Activated CD4-positive, alpha-beta memory T cell treated with anti-CD3 and anti-CD28 coated beads, Interleukin-2, amount 10 ng/mL, durations not matched to agents 7 days and 5 days (primary cell): ENCODE measurements at regions of chr11 and their contacts with region 1.

Region 1: DNA sequence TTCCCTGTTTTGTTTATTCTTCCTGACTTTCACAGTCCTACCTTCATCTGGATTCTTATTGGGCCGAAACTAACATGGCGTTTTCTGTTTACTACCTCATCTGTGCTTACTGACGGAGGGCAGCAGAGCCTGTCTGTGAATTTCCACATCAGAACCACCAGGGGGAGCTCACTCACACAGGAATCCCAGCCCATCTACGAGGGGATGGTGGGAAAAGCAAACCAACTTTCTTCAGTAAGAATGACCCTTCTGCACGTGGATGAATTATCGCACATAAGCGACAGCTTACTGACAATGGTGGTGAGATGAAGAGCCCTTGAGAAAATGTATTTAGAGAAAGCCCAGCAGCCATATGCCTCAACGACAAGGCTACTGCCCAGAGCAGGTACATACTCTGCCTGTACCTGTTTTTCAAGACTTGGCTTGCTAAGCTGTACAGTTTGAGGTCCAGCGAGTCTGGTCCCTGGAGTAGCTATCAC is 42.5 kb downstream of the LARGE2 start:
- DNase-seq: peak; percentile 62
- H3K4me3 Mint-ChIP-seq: no peak overlapping the region
- H3K27ac Mint-ChIP-seq: no peak overlapping the region
- H3K4me1 Mint-ChIP-seq: no peaks in the 10 kb centered on the region
- H3K27me3 Mint-ChIP-seq: no peaks in the 10 kb centered on the region

Region 2: GRCh38 chr11:45906096-45906682 is 58.8 kb before region 1 on chr11:
- CTCF ChIA-PET with region 1: no interaction called
- POLR2A ChIA-PET with region 1: no interaction called
- DNase-seq: no peak
- H3K4me3 Mint-ChIP-seq: no peak overlapping the region
- H3K27ac Mint-ChIP-seq: no peak overlapping the region
- H3K4me1 Mint-ChIP-seq: peaks cover 6% of the 10 kb centered on the region
- H3K27me3 Mint-ChIP-seq: peaks cover 7% of the 10 kb centered on the region

Region 3: GRCh38 chr11:45941285-45941684 is 23.7 kb before region 1 on chr11:
- CTCF ChIA-PET with region 1: interaction called, 15 read pairs
- POLR2A ChIA-PET with region 1: no interaction called
- DNase-seq: no peak
- H3K4me3 Mint-ChIP-seq: no peak overlapping the region
- H3K27ac Mint-ChIP-seq: no peak overlapping the region
- H3K4me1 Mint-ChIP-seq: no peaks in the 10 kb centered on the region
- H3K27me3 Mint-ChIP-seq: no peaks in the 10 kb centered on the region

Region 4: GRCh38 chr11:45982656-45983470 is 17.9 kb after region 1 on chr11:
- CTCF ChIA-PET with region 1: interaction called, 42 read pairs
- POLR2A ChIA-PET with region 1: no interaction called
- DNase-seq: no peak
- H3K4me3 Mint-ChIP-seq: no peak overlapping the region
- H3K27ac Mint-ChIP-seq: no peak overlapping the region
- H3K4me1 Mint-ChIP-seq: peaks cover 13% of the 10 kb centered on the region
- H3K27me3 Mint-ChIP-seq: no peaks in the 10 kb centered on the region

Region 5: GRCh38 chr11:46001448-46001914 is 36.5 kb after region 1 on chr11:
- CTCF ChIA-PET with region 1: interaction called, 44 read pairs
- POLR2A ChIA-PET with region 1: no interaction called
- DNase-seq: no peak
- H3K4me3 Mint-ChIP-seq: no peak overlapping the region
- H3K27ac Mint-ChIP-seq: no peak overlapping the region
- H3K4me1 Mint-ChIP-seq: peaks cover 2% of the 10 kb centered on the region
- H3K27me3 Mint-ChIP-seq: no peaks in the 10 kb centered on the region

Region 6: GRCh38 chr11:46121724-46122477 is 157.0 kb after region 1 on chr11:
- CTCF ChIA-PET with region 1: interaction called, 13 read pairs
- POLR2A ChIA-PET with region 1: no interaction called
- DNase-seq: peak; percentile 80
- H3K4me3 Mint-ChIP-seq: peak overlapping the region; percentile 89
- H3K27ac Mint-ChIP-seq: peak overlapping the region; percentile 89
- H3K4me1 Mint-ChIP-seq: peaks cover 41% of the 10 kb centered on the region
- H3K27me3 Mint-ChIP-seq: no peaks in the 10 kb centered on the region